Activated CD4-positive, alpha-beta T cell treated with anti-CD3 and anti-CD28 coated beads, Interleukin-2, amount 10 ng/mL, durations not matched to agents 24 days and 14 days (primary cell): ENCODE measurements at regions of chr20 and their contacts with region 1.

Region 1: DNA sequence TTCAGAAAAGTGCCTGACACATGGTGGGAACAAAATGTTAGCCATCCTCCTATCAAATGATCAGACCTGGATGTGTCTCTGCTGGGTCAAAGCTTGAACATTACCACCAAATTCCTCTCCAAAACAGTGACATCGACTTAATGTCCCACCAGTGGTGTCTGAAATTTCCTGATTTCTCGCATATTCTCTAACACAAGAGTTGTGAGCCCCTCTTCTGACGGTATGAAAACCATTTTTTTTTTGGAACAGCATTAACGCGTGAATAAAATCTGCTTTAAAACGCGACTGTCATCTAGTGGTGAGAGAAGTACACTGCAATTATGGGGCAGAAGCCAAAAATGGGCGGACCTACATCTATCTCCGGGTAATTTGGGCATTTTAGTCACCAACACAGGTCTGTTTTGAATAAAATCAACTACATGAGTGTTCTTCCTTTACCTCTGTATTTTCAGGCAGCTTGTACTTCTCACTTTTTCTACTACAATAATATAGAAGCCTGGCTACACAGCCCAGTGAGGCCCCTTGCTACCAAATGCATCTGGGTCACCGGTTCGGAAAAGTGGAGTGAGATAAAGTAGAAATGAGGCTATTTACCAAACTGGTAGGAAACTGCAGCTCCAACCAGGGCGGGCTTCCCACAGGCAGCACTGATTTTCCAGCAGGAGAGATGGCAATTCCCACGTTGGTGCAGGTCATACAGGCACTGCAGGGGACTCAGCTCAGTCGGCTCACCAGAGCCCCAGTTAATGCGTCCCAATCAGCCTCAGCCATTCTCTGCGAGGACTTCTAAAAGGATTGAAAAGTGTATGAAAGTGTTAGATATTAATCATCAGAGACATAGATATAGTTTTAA is 27.4 kb downstream of the MGME1 start:
- DNase-seq: peak; percentile 87
- H3K4me3 Mint-ChIP-seq: no peak overlapping the region
- H3K27ac Mint-ChIP-seq: no peak overlapping the region
- H3K4me1 Mint-ChIP-seq: peaks cover 38% of the 10 kb centered on the region
- H3K27me3 Mint-ChIP-seq: peaks cover 3% of the 10 kb centered on the region

Region 2: DNA sequence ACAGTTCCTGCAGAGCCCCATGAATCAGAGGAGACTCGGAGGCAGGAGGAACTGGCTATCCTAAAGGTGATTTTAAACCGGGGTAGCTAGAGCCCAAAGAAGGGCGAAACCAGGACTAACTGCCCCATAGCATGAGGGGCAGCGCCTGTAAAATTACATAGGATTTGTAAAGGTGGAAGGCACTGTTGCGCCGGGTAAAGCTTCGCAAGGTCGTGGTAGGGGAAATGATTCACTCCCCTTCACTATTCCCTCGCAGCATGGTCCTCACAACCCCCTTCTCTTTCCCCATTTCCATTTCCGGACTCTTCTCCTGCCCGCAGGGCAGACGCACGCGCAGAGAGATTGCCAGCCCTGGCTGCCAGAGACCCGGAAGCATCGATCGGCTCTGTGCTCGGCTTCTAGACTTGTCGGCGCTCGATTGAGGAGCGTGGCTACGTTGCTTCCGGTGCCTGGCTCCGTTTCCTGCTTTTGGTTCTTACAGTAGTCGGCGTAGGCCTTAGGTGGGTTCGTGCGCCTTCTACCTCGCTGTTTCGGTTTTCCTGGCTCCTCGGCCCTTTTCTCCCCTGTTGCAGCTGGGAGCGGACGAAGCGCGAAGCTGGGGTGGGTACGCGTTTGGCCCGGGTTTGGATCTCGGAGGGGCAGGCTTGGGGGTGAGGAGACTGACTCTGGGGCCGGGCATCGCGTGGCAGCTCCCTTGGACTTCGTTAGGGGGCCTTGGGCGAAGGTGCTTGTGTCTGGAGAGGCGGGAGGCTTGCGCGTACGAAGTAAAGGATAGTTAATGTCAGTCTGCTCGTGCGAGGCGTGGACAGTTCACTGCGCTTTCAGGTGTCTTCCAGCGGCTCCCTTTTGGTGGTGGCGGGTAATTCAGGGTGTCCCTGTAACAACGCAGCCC is 1266.4 kb before region 1 on chr20 and contains the start of gene SNRPB2:
- intact Hi-C with region 1: loop called (anchors 5 kb)
- DNase-seq: peak; percentile 97
- H3K4me3 Mint-ChIP-seq: peak within 1 kb of the TSS; percentile 100
- H3K27ac Mint-ChIP-seq: peak within 1 kb of the TSS; percentile 100
- H3K4me1 Mint-ChIP-seq: peaks cover 49% of the 10 kb centered on the region
- H3K27me3 Mint-ChIP-seq: peaks cover 16% of the 10 kb centered on the region
- total RNA-seq, gene SNRPB2: 132 and 134 TPM in 2 replicates

Region 3: GRCh38 chr20:17536944-17537444 is 459.2 kb before region 1 on chr20:
- intact Hi-C with region 1: loop called (anchors 10 kb)
- DNase-seq: peak; percentile 91
- H3K4me3 Mint-ChIP-seq: no peak overlapping the region
- H3K27ac Mint-ChIP-seq: no peak overlapping the region
- H3K4me1 Mint-ChIP-seq: peaks cover 26% of the 10 kb centered on the region
- H3K27me3 Mint-ChIP-seq: peaks cover 25% of the 10 kb centered on the region

Region 4: GRCh38 chr20:17662333-17663039 is 333.7 kb before region 1 on chr20:
- intact Hi-C with region 1: loop called (anchors 5 kb)
- DNase-seq: no peak
- H3K4me3 Mint-ChIP-seq: peak overlapping the region; percentile 28
- H3K27ac Mint-ChIP-seq: peak overlapping the region; percentile 73
- H3K4me1 Mint-ChIP-seq: peaks cover 49% of the 10 kb centered on the region
- H3K27me3 Mint-ChIP-seq: no peaks in the 10 kb centered on the region

Region 5: GRCh38 chr20:17898548-17898994 is 97.6 kb before region 1 on chr20:
- intact Hi-C with region 1: loop called (anchors 1 kb)
- DNase-seq: peak; percentile 90
- H3K4me3 Mint-ChIP-seq: no peak overlapping the region
- H3K27ac Mint-ChIP-seq: no peak overlapping the region
- H3K4me1 Mint-ChIP-seq: peaks cover 24% of the 10 kb centered on the region
- H3K27me3 Mint-ChIP-seq: peaks cover 33% of the 10 kb centered on the region

Region 6: GRCh38 chr20:17968366-17969279 is 27.6 kb before region 1 on chr20 and contains the starts of genes MGME1 and SNX5:
- intact Hi-C with region 1: loop called (anchors 1 kb)
- DNase-seq: peak; percentile 100
- H3K4me3 Mint-ChIP-seq: peak within 1 kb of the TSS; percentile 96
- H3K27ac Mint-ChIP-seq: peak within 1 kb of the TSS; percentile 99
- H3K4me1 Mint-ChIP-seq: peaks cover 51% of the 10 kb centered on the region
- H3K27me3 Mint-ChIP-seq: no peaks in the 10 kb centered on the region
- total RNA-seq, gene MGME1: 32.7 and 34.3 TPM in 2 replicates
- total RNA-seq, gene SNX5: 230 and 240 TPM in 2 replicates